Kidney (tissue), 22 donors: ENCODE measurements at regions of chr3 and their contacts with region 1.

Region 1: GRCh38 chr3:132722164-132723024 is at the start of gene NPHP3:
- DNase-seq: peak; percentile 97 to 100 (median 100)
- H3K4me3 ChIP-seq: peak within 1 kb of the TSS; percentile 81 to 84 (median 83)
- H3K27ac ChIP-seq: peak within 1 kb of the TSS; percentile 93 to 96
- H3K4me1 ChIP-seq: peaks cover 4 to 7% (median 5%) of the 10 kb centered on the region in 3 donors
- H3K27me3 ChIP-seq: no peaks in the 10 kb centered on the region
- CTCF ChIP-seq: no peak
- total RNA-seq, gene NPHP3: 23.2 TPM

Region 2: GRCh38 chr3:132416807-132417694 is 305.3 kb before region 1 on chr3 and contains the start of gene DNAJC13:
- intact Hi-C with region 1: no loop called
- DNase-seq: peak; percentile 95 to 98 (median 97)
- H3K4me3 ChIP-seq: peak within 1 kb of the TSS; percentile 91 to 96 (median 95)
- H3K27ac ChIP-seq: peak within 1 kb of the TSS; percentile 81 to 86
- H3K4me1 ChIP-seq: peaks cover 0 to 3% (median 0%) of the 10 kb centered on the region in 3 donors
- H3K27me3 ChIP-seq: no peaks in the 10 kb centered on the region
- CTCF ChIP-seq: no peak
- total RNA-seq, gene DNAJC13: 43.1 TPM

Region 3: GRCh38 chr3:133426721-133427120 is 704.3 kb after region 1 on chr3:
- intact Hi-C with region 1: loop called (anchors 10 kb)
- DNase-seq: peak in 1 of 5 donors; percentile 9
- H3K4me3 ChIP-seq: no peak overlapping the region
- H3K27ac ChIP-seq: no peak overlapping the region
- H3K4me1 ChIP-seq: no peaks in the 10 kb centered on the region
- H3K27me3 ChIP-seq: no peaks in the 10 kb centered on the region
- CTCF ChIP-seq: no peak